CD4-positive, alpha-beta memory T cell (primary cell): ENCODE measurements at regions of chr5 and their contacts with region 1.

Region 1: DNA sequence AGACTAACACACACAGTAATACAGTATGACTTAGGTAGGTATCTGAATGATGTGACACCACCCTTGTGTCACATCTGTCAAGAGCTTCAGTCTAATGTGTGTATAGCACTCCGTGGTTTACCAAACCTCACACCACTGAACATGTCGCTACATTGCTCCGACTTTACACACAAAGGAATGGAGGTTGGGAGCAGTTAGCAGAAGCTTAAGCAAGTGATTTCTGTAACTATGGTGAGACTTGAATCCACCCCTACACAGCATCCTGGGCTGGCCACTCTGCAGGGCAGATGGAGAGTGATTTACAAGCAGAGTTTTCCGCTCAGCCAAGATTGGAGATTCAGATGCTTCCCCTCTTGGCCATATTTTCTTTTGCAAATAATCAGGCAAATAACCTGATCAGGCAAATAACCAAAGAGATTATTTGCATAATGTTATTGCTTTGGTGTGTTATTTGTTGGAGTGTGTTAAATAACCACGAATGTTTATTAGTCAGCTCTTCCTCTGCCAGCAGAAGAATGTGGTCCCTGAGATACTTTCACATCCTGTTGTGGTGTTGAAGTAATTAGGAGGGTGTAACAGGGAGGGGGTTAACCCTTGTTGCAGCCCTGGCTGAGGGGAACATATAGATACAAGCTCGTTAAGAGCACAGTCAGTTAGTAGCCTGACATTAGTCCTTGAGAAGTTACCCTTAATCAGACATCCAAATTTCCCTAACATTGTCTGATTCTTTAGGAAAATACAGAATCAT is 92.8 kb downstream of the SNX18 start:
- DNase-seq: peak; percentile 43 to 60 (median 55)
- H3K4me3 ChIP-seq: peak overlapping the region; percentile 3 to 49
- H3K4me3 Mint-ChIP-seq: peak overlapping the region; percentile 54 to 86 (median 77)
- H3K27ac ChIP-seq: no peak overlapping the region
- H3K27ac Mint-ChIP-seq: peak overlapping the region; percentile 64 to 84 (median 68)
- H3K4me1 ChIP-seq: peaks cover 22% of the 10 kb centered on the region
- H3K4me1 Mint-ChIP-seq: peaks cover 23 to 25% (median 25%) of the 10 kb centered on the region in 4 donors
- H3K27me3 ChIP-seq: no peaks in the 10 kb centered on the region
- H3K27me3 Mint-ChIP-seq: no peaks in the 10 kb centered on the region

Region 2: DNA sequence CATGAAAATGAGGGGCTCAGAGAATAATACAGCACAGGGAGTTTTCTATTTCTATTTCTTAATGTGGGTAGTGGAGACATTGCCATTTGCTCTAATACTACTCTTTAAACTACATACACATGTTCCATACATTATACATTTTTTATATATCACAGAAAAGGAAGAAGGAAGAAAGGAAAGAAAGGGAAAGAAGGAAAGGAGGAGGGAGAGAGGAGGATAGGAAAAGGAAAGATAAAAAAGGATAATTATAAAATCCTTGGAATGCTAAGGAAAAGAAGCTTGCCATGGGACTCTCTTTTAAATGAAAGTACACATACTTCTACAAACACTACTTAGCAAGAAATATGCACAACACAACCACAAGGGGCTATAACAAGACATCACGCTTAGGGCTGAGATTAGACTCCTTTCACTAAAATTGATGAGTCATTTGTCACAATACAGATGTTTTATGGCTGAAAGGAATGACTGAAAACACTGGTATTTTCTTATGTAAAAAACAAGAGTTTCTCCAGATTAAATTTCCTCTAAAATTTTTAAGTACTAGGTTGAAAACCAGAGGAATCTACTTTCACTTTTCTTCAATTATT is 519.8 kb before region 1 on chr5:
- CTCF ChIA-PET with region 1: no interaction called
- POLR2A ChIA-PET with region 1: no interaction called
- intact Hi-C with region 1: no loop called
- DNase-seq: no peak
- H3K4me3 ChIP-seq: no peak overlapping the region
- H3K4me3 Mint-ChIP-seq: no peak overlapping the region
- H3K27ac ChIP-seq: no peak overlapping the region
- H3K27ac Mint-ChIP-seq: no peak overlapping the region
- H3K4me1 ChIP-seq: no peaks in the 10 kb centered on the region
- H3K4me1 Mint-ChIP-seq: peaks cover 0 to 4% (median 2%) of the 10 kb centered on the region in 4 donors
- H3K27me3 ChIP-seq: no peaks in the 10 kb centered on the region
- H3K27me3 Mint-ChIP-seq: no peaks in the 10 kb centered on the region

Region 3: GRCh38 chr5:54570916-54571315 is 39.5 kb before region 1 on chr5:
- CTCF ChIA-PET with region 1: no interaction called
- POLR2A ChIA-PET with region 1: no interaction called
- intact Hi-C with region 1: no loop called
- DNase-seq: no peak
- H3K4me3 ChIP-seq: no peak overlapping the region
- H3K4me3 Mint-ChIP-seq: no peak overlapping the region
- H3K27ac ChIP-seq: no peak overlapping the region
- H3K27ac Mint-ChIP-seq: no peak overlapping the region
- H3K4me1 ChIP-seq: peaks cover 6% of the 10 kb centered on the region
- H3K4me1 Mint-ChIP-seq: peaks cover 8 to 19% (median 10%) of the 10 kb centered on the region in 4 donors
- H3K27me3 ChIP-seq: no peaks in the 10 kb centered on the region
- H3K27me3 Mint-ChIP-seq: no peaks in the 10 kb centered on the region

Region 4: GRCh38 chr5:54637654-54638053 is 27.3 kb after region 1 on chr5:
- CTCF ChIA-PET with region 1: interaction called, 3 read pairs
- POLR2A ChIA-PET with region 1: interaction called, 21 read pairs
- intact Hi-C with region 1: loop called (anchors 2 kb)
- DNase-seq: peak in 1 of 5 donors; percentile 6
- H3K4me3 ChIP-seq: no peak overlapping the region
- H3K4me3 Mint-ChIP-seq: peak overlapping the region in 6 of 8 donors; percentile 26 to 75 (median 54)
- H3K27ac ChIP-seq: no peak overlapping the region
- H3K27ac Mint-ChIP-seq: peak overlapping the region in 5 of 7 donors; percentile 46 to 78 (median 73)
- H3K4me1 ChIP-seq: peaks cover 25% of the 10 kb centered on the region
- H3K4me1 Mint-ChIP-seq: peaks cover 15 to 30% (median 24%) of the 10 kb centered on the region in 4 donors
- H3K27me3 ChIP-seq: no peaks in the 10 kb centered on the region
- H3K27me3 Mint-ChIP-seq: no peaks in the 10 kb centered on the region

Region 5: DNA sequence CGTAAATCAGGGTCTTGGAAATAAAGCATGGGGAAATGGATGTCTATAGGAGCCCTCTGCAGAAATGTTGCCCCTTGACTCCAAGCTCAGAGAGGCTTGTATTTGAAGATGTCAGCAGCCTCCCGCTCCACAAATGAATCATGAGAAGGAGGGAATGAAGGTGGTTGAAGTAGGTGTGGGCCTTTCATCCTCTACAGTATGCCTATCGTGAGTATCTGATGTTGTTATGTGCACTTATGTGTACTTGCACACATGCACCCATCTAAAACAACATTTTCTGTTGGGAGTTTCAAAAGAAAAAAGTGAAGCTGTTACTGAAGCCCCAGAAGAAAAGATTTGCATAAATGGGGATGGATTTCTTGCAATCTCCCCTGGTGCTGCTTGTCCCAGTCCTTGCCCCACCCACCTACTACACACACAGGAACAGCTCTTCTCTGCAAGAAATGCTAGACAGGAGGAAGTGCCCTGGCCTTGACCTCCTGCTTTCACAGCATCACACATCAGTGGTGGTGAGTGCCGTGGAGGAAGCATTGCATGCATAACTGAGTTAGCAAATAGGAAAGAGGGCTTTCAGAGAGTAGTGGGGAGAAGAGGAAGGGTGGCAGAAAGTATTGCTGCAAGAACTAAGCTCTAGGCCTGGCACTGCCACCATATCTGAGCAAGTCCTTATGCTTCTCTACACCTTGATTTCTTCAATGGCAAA is 63.3 kb after region 1 on chr5:
- CTCF ChIA-PET with region 1: interaction called, 3 read pairs
- POLR2A ChIA-PET with region 1: interaction called, 14 read pairs
- intact Hi-C with region 1: no loop called
- DNase-seq: peak; percentile 35 to 67 (median 40)
- H3K4me3 ChIP-seq: no peak overlapping the region
- H3K4me3 Mint-ChIP-seq: peak overlapping the region in 7 of 8 donors; percentile 3 to 70 (median 51)
- H3K27ac ChIP-seq: no peak overlapping the region
- H3K27ac Mint-ChIP-seq: peak overlapping the region; percentile 0 to 78 (median 24)
- H3K4me1 ChIP-seq: peaks cover 40% of the 10 kb centered on the region
- H3K4me1 Mint-ChIP-seq: peaks cover 39 to 66% (median 54%) of the 10 kb centered on the region in 4 donors
- H3K27me3 ChIP-seq: no peaks in the 10 kb centered on the region
- H3K27me3 Mint-ChIP-seq: no peaks in the 10 kb centered on the region

Region 6: GRCh38 chr5:54727874-54728587 is 117.7 kb after region 1 on chr5:
- CTCF ChIA-PET with region 1: no interaction called
- POLR2A ChIA-PET with region 1: no interaction called
- intact Hi-C with region 1: no loop called
- DNase-seq: no peak
- H3K4me3 ChIP-seq: no peak overlapping the region
- H3K4me3 Mint-ChIP-seq: no peak overlapping the region
- H3K27ac ChIP-seq: no peak overlapping the region
- H3K27ac Mint-ChIP-seq: no peak overlapping the region
- H3K4me1 ChIP-seq: no peaks in the 10 kb centered on the region
- H3K4me1 Mint-ChIP-seq: peaks cover 0 to 4% (median 1%) of the 10 kb centered on the region in 4 donors
- H3K27me3 ChIP-seq: no peaks in the 10 kb centered on the region
- H3K27me3 Mint-ChIP-seq: peaks cover 0 to 2% of the 10 kb centered on the region in 2 donors